ENCODE measurements at regions of chr14 and their contacts with region 1.

Region 1: GRCh38 chr14:67695394-67695949 is at the start of gene RDH11:
- DNase-seq: peak; percentile 90

Region 2: GRCh38 chr14:67619446-67620216 is 75.8 kb before region 1 on chr14 and contains the start of gene ARG2:
- CTCF ChIA-PET with region 1: interaction called, 3 read pairs
- POLR2A ChIA-PET with region 1: interaction called, 21 read pairs
- DNase-seq: peak; percentile 96

Region 3: DNA sequence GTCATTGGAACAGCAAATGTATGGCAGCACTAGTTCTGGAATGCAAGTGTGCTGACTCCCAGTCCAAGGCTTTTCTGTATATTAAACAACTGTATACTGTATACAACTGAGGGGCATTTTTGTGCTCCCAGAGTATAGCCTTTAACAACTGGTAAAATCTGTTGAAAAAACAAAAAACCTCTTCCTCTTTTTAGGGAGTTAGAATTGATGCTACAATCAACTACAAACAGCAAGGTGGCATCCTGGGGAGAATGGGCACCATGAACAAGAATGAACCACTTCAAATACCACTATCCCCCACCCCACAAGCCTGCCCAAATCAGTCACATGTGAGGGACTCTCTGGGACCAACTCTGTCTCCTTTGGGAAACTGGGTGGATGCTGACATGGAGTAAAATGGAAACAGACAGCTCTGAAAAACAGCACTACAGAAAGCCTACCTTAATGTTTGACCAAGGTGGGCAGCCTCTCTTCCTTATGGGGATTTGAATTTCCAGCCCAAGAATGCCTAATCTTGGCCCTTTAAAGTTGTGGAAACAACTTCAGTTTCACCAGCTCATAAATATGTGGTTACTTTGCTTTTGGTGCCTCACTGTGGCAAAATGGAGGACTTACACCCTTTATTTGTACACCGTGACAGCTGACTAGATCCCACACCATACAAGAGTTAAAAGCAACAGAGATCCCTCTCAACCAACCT is 28.6 kb before region 1 on chr14:
- CTCF ChIA-PET with region 1: interaction called, 5 read pairs
- POLR2A ChIA-PET with region 1: interaction called, 12 read pairs
- DNase-seq: peak; percentile 57

Region 4: GRCh38 chr14:67674481-67675169 is 20.8 kb before region 1 on chr14 and contains the start of gene VTI1B:
- CTCF ChIA-PET with region 1: interaction called, 3 read pairs
- POLR2A ChIA-PET with region 1: interaction called, 20 read pairs
- DNase-seq: peak; percentile 87

Measured in HEK293T (cell line).